ENCODE measurements at regions of chr6 and their contacts with region 1.

Region 1: DNA sequence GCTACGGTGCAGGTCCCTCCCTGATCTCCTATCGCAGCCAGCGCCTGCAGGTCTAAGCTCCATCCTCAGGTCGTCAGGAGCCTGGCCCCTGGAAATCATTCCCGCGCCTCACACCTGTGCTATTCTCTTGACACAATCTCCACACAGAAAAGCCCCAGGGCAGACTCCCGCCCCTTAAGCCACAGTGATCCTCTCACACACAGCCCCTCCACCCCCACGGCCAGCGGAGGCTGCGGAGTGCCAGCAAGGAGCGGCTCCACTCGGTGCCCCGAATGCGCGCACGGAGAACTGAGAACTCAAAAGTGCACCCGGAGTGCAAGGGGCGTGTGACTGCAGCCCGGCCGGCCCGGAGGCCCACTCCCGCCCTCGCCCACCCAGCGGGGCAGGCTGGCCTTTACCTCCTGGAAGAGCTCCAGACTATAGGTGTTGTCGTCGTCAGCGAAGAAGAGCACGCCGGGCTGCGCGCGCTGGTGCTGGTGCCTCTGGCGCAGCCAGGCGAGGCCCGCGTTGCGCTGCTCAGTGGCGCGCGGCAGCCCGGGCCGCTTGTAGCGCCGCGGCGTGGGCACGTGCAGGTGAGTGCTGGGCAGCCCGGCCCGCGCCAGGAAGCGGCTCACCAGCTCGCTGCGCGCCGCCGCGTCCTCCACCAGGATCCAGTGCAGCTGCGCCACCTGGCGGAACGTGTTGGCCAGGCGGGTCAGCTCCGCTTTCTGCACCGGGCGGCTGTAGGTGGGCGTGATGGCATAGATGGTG is 1.2 kb downstream of the B3GAT2 start:
- DNase-seq: peak; percentile 63 to 88 (median 81)
- ATAC-seq: peak; percentile 95
- H3K4me3 ChIP-seq: peak overlapping the region; percentile 62
- H3K4me3 Mint-ChIP-seq: peak overlapping the region; percentile 70 to 92 (median 82)
- H3K27ac ChIP-seq: no peak overlapping the region
- H3K27ac Mint-ChIP-seq: no peak overlapping the region
- H3K4me1 ChIP-seq: peaks cover 0 to 7% of the 10 kb centered on the region in 2 donors
- H3K4me1 Mint-ChIP-seq: peaks cover 9 to 19% (median 16%) of the 10 kb centered on the region in 7 donors
- H3K27me3 ChIP-seq: peaks cover 0 to 10% of the 10 kb centered on the region in 2 donors
- H3K27me3 Mint-ChIP-seq: peaks cover 54 to 85% (median 60%) of the 10 kb centered on the region in 5 donors

Region 2: GRCh38 chr6:69866770-69867638 is 1088.6 kb before region 1 on chr6:
- CTCF ChIA-PET with region 1: no interaction called
- POLR2A ChIA-PET with region 1: no interaction called
- intact Hi-C with region 1: loop called in 1 of 2 experiments (anchors 10 kb)
- DNase-seq: peak; percentile 42 to 64 (median 55)
- ATAC-seq: peak; percentile 84
- H3K4me3 ChIP-seq: peak overlapping the region; percentile 55
- H3K4me3 Mint-ChIP-seq: peak overlapping the region; percentile 79 to 98 (median 89)
- H3K27ac ChIP-seq: peak overlapping the region; percentile 4
- H3K27ac Mint-ChIP-seq: peak overlapping the region in 7 of 9 donors; percentile 15 to 85 (median 51)
- H3K4me1 ChIP-seq: peaks cover 5 to 6% of the 10 kb centered on the region in 2 donors
- H3K4me1 Mint-ChIP-seq: peaks cover 15 to 24% (median 20%) of the 10 kb centered on the region in 7 donors
- H3K27me3 ChIP-seq: no peaks in the 10 kb centered on the region
- H3K27me3 Mint-ChIP-seq: peaks cover 8 to 66% (median 34%) of the 10 kb centered on the region in 5 donors

Region 3: GRCh38 chr6:70221025-70221714 is 734.4 kb before region 1 on chr6:
- CTCF ChIA-PET with region 1: interaction called, 3 read pairs
- POLR2A ChIA-PET with region 1: no interaction called
- intact Hi-C with region 1: loop called (anchors 1 to 5 kb)
- DNase-seq: peak in 4 of 9 donors; percentile 3 to 16 (median 11)
- ATAC-seq: peak; percentile 50
- H3K4me3 ChIP-seq: no peak overlapping the region
- H3K4me3 Mint-ChIP-seq: no peak overlapping the region
- H3K27ac ChIP-seq: no peak overlapping the region
- H3K27ac Mint-ChIP-seq: no peak overlapping the region
- H3K4me1 ChIP-seq: no peaks in the 10 kb centered on the region
- H3K4me1 Mint-ChIP-seq: peaks cover 0 to 1% (median 0%) of the 10 kb centered on the region in 7 donors
- H3K27me3 ChIP-seq: no peaks in the 10 kb centered on the region
- H3K27me3 Mint-ChIP-seq: peaks cover 4 to 31% (median 7%) of the 10 kb centered on the region in 5 donors

Region 4: GRCh38 chr6:70310063-70310694 is 645.4 kb before region 1 on chr6:
- CTCF ChIA-PET with region 1: no interaction called
- POLR2A ChIA-PET with region 1: no interaction called
- intact Hi-C with region 1: loop called (anchors 1 to 5 kb)
- DNase-seq: peak in 5 of 9 donors; percentile 7 to 21 (median 11)
- ATAC-seq: no peak
- H3K4me3 ChIP-seq: no peak overlapping the region
- H3K4me3 Mint-ChIP-seq: no peak overlapping the region
- H3K27ac ChIP-seq: no peak overlapping the region
- H3K27ac Mint-ChIP-seq: no peak overlapping the region
- H3K4me1 ChIP-seq: no peaks in the 10 kb centered on the region
- H3K4me1 Mint-ChIP-seq: peaks cover 0 to under 1% (median 0%) of the 10 kb centered on the region in 7 donors
- H3K27me3 ChIP-seq: no peaks in the 10 kb centered on the region
- H3K27me3 Mint-ChIP-seq: peaks cover 9 to 41% (median 28%) of the 10 kb centered on the region in 5 donors

Region 5: DNA sequence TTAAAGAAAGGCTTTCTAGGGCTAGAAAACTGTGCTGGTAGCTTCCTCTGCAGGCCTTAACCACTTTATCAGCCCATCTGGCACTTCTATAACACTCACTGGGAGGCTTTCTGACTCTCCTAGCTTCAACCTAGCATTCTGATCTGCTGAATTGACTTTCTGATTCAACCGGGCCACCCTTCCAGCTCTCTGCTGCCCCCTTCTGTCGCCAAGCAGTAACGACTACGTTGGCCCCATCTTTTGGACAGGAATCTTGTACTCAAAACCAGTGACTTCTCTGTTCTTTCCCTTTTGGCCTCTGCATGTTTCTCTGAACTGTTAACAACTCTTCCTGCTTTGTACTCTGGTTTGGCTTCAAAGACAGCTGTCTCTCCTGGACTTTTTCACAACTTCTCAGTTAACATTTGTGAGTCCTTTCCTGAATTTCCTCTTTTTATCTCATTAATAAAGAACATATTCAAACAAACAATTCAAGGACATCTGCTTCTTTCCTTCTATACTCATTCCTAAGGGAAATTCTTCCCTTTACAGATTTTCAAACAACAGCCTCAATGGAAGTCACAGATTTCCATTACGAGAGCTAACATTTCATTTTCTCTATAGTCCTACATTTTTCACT is 586.2 kb before region 1 on chr6:
- CTCF ChIA-PET with region 1: no interaction called
- POLR2A ChIA-PET with region 1: no interaction called
- intact Hi-C with region 1: loop called in 1 of 2 experiments (anchors 10 kb)
- DNase-seq: peak; percentile 26 to 64 (median 58)
- ATAC-seq: peak; percentile 92
- H3K4me3 ChIP-seq: no peak overlapping the region
- H3K4me3 Mint-ChIP-seq: no peak overlapping the region
- H3K27ac ChIP-seq: no peak overlapping the region
- H3K27ac Mint-ChIP-seq: no peak overlapping the region
- H3K4me1 ChIP-seq: no peaks in the 10 kb centered on the region
- H3K4me1 Mint-ChIP-seq: peaks cover 0 to 7% (median 0%) of the 10 kb centered on the region in 7 donors
- H3K27me3 ChIP-seq: no peaks in the 10 kb centered on the region
- H3K27me3 Mint-ChIP-seq: peaks cover 10 to 39% (median 19%) of the 10 kb centered on the region in 5 donors

Region 6: DNA sequence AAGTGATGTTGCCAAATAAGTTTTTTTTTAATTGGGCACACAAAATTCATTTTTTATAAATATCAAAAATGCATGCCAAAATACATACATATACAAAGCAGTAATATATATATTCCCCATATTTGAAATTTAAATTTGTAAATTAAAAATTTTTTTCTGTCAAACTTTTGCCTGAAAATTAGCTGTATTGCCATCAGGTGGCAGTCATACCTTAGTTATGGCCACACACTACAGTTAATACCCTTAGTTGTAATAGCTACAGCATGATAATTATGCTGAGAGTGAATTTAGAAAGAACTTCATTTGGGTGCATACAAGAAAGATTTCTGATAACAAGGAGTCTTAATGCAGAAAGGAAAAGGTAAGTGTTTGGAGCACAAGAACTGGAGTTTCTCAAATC is 435.0 kb before region 1 on chr6:
- CTCF ChIA-PET with region 1: interaction called, 5 read pairs
- POLR2A ChIA-PET with region 1: no interaction called
- intact Hi-C with region 1: loop called (anchors 1 to 5 kb)
- DNase-seq: peak in 5 of 9 donors; percentile 11 to 32 (median 15)
- ATAC-seq: peak; percentile 47
- H3K4me3 ChIP-seq: no peak overlapping the region
- H3K4me3 Mint-ChIP-seq: no peak overlapping the region
- H3K27ac ChIP-seq: no peak overlapping the region
- H3K27ac Mint-ChIP-seq: no peak overlapping the region
- H3K4me1 ChIP-seq: no peaks in the 10 kb centered on the region
- H3K4me1 Mint-ChIP-seq: peaks cover 0 to 12% (median 9%) of the 10 kb centered on the region in 7 donors
- H3K27me3 ChIP-seq: no peaks in the 10 kb centered on the region
- H3K27me3 Mint-ChIP-seq: no peaks in the 10 kb centered on the region

Region 7: GRCh38 chr6:70599187-70599586 is 356.4 kb before region 1 on chr6:
- CTCF ChIA-PET with region 1: no interaction called
- POLR2A ChIA-PET with region 1: no interaction called
- intact Hi-C with region 1: no loop called
- DNase-seq: peak in 2 of 9 donors; percentile 5 to 34
- ATAC-seq: peak; percentile 41
- H3K4me3 ChIP-seq: no peak overlapping the region
- H3K4me3 Mint-ChIP-seq: peak overlapping the region in 1 of 10 donors; percentile 44
- H3K27ac ChIP-seq: no peak overlapping the region
- H3K27ac Mint-ChIP-seq: peak overlapping the region in 2 of 9 donors; percentile 30 to 35
- H3K4me1 ChIP-seq: no peaks in the 10 kb centered on the region
- H3K4me1 Mint-ChIP-seq: peaks cover 0 to 14% (median 5%) of the 10 kb centered on the region in 7 donors
- H3K27me3 ChIP-seq: no peaks in the 10 kb centered on the region
- H3K27me3 Mint-ChIP-seq: peaks cover 0 to 5% (median 0%) of the 10 kb centered on the region in 5 donors

Region 8: DNA sequence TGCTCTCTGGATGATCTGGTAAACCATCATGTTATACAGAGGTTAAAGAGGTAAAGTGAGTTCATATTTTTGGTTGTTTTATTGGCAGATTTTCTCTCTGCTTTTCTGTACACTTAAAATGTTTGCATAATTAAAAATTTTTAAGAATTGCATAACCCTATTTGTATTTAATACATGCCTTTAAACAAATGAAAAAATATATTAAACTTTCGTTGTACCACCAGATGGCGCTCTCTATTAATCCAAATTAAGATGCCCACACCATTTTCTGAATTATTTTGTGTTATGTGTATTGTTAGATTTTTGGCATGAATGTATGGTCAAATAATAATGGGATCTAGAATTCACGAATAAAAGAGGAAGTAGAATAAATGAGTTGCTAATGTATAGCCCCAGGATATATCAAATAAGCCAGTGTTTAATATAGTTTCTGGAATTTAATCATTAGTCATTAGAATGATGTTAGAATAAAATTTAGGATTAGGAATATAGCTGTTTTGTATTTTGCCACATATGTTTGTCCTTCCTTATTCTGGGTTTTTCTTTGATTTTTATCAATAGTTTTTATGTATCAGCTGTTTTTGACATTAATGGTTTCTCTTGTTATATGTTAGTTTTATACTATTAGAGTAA is 249.0 kb before region 1 on chr6:
- CTCF ChIA-PET with region 1: interaction called, 10 read pairs
- POLR2A ChIA-PET with region 1: no interaction called
- intact Hi-C with region 1: loop called (anchors 1 kb)
- DNase-seq: peak in 6 of 9 donors; percentile 14 to 50 (median 45)
- ATAC-seq: peak; percentile 47
- H3K4me3 ChIP-seq: no peak overlapping the region
- H3K4me3 Mint-ChIP-seq: no peak overlapping the region
- H3K27ac ChIP-seq: no peak overlapping the region
- H3K27ac Mint-ChIP-seq: no peak overlapping the region
- H3K4me1 ChIP-seq: peaks cover 5% of the 10 kb centered on the region in 2 donors
- H3K4me1 Mint-ChIP-seq: peaks cover 25 to 73% (median 59%) of the 10 kb centered on the region in 7 donors
- H3K27me3 ChIP-seq: no peaks in the 10 kb centered on the region
- H3K27me3 Mint-ChIP-seq: no peaks in the 10 kb centered on the region